PC-3 (cell line): ENCODE measurements at regions of chr17 and their contacts with region 1.

Region 1: GRCh38 chr17:55825213-55825612 is 74.4 kb downstream of the PCTP start:
- DNase-seq: peak; percentile 55
- ATAC-seq: peak; percentile 70
- H3K4me3 ChIP-seq: no peak overlapping the region
- H3K27ac ChIP-seq: no peak overlapping the region
- H3K4me1 ChIP-seq: no peaks in the 10 kb centered on the region
- H3K27me3 ChIP-seq: peaks cover 67% of the 10 kb centered on the region
- CTCF ChIP-seq: peak; percentile 80

Region 2: GRCh38 chr17:55735731-55736405 is 89.3 kb before region 1 on chr17:
- CTCF ChIA-PET with region 1: no interaction called
- POLR2A ChIA-PET with region 1: no interaction called
- intact Hi-C with region 1: loop called (anchors 10 kb)
- DNase-seq: peak; percentile 66
- ATAC-seq: peak; percentile 65
- H3K4me3 ChIP-seq: no peak overlapping the region
- H3K27ac ChIP-seq: no peak overlapping the region
- H3K4me1 ChIP-seq: peaks cover 19% of the 10 kb centered on the region
- H3K27me3 ChIP-seq: no peaks in the 10 kb centered on the region
- CTCF ChIP-seq: peak; percentile 93

Region 3: DNA sequence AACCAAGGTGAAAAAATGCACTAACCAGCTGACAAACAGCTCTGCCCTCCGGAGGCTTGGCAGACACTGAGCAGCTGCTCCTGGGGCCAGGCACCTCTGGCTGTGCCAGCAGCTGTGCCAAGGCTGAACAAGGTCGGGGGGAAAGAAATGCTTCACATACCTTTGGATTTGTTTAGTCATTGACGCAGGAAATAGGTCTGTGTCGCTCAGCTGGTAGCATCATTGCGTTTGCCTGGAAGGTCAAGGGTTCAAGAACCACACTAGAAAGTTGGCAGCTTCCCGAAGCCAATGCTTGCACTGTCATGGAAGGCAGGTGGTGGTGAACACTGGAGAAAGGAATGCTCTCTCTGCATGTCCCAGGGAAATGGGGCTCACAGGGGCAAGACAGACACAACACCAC is 10.8 kb before region 1 on chr17:
- CTCF ChIA-PET with region 1: no interaction called
- POLR2A ChIA-PET with region 1: no interaction called
- intact Hi-C with region 1: no loop called
- DNase-seq: no peak
- ATAC-seq: no peak
- H3K4me3 ChIP-seq: no peak overlapping the region
- H3K27ac ChIP-seq: no peak overlapping the region
- H3K4me1 ChIP-seq: no peaks in the 10 kb centered on the region
- H3K27me3 ChIP-seq: peaks cover 44% of the 10 kb centered on the region
- CTCF ChIP-seq: no peak

Region 4: GRCh38 chr17:55926276-55926990 is 101.2 kb after region 1 on chr17:
- CTCF ChIA-PET with region 1: no interaction called
- POLR2A ChIA-PET with region 1: no interaction called
- intact Hi-C with region 1: no loop called
- DNase-seq: no peak
- ATAC-seq: no peak
- H3K4me3 ChIP-seq: no peak overlapping the region
- H3K27ac ChIP-seq: no peak overlapping the region
- H3K4me1 ChIP-seq: no peaks in the 10 kb centered on the region
- H3K27me3 ChIP-seq: peaks cover 8% of the 10 kb centered on the region; the same call in 1 of the 2 replicates
- CTCF ChIP-seq: no peak